ENCODE measurements at regions of chr15 and their contacts with region 1.

Region 1: DNA sequence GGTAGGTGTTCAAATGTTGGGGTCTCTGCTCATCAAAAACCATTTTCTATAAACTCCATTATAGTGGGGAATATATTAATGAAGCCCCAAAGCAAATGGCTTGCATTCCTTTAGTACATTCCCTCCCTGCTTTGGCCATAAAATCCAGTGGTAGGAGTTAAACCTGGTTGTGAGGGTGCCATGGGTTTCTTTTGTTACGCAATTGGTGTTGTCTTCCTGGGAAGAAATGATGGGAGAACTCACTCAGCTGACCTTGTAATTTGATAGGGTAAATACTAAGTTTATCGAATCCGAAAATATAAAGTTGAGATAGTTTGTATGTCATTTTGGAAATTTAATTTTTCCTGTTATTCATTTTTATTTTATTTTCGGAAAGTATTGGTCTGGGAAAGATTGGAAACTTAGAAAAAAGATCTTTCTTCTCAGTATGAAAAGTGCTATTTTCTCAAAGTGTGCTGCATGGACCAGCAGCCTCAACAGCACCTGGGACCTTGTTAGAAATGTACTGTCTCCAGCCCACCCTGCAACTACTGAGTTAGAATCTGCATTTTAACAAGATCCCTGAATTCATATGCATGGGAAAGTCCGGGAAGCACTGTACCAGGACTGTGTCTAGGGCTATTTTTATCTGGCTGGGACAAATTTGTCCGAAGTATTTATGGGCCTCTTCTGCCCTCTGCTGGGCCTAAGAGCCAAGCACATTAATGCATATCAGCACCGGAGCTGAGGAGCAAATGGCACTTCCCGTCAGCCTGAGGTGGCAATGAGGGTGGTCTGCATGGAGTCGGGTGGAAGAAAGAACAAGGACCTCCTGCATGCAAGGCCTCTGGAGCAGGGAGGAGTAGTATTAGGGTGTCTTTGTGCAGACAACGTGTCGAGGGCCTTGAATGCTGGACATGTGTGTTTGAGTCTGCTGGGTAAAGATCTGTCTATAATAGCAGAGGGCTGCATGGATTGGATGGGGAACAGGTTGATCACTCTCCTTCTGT is 54.7 kb downstream of the FAM81A start:
- DNase-seq: peak; percentile 56
- H3K4me3 Mint-ChIP-seq: no peak overlapping the region
- H3K27ac Mint-ChIP-seq: no peak overlapping the region
- H3K4me1 Mint-ChIP-seq: peaks cover 2% of the 10 kb centered on the region
- H3K27me3 Mint-ChIP-seq: no peaks in the 10 kb centered on the region

Region 2: GRCh38 chr15:59174835-59175831 is 317.6 kb before region 1 on chr15:
- CTCF ChIA-PET with region 1: interaction called, 22 read pairs
- POLR2A ChIA-PET with region 1: no interaction called
- intact Hi-C with region 1: loop called (anchors 2 kb)
- DNase-seq: peak; percentile 70
- H3K4me3 Mint-ChIP-seq: no peak overlapping the region
- H3K27ac Mint-ChIP-seq: no peak overlapping the region
- H3K4me1 Mint-ChIP-seq: peaks cover 14% of the 10 kb centered on the region
- H3K27me3 Mint-ChIP-seq: peaks cover 14% of the 10 kb centered on the region

Region 3: DNA sequence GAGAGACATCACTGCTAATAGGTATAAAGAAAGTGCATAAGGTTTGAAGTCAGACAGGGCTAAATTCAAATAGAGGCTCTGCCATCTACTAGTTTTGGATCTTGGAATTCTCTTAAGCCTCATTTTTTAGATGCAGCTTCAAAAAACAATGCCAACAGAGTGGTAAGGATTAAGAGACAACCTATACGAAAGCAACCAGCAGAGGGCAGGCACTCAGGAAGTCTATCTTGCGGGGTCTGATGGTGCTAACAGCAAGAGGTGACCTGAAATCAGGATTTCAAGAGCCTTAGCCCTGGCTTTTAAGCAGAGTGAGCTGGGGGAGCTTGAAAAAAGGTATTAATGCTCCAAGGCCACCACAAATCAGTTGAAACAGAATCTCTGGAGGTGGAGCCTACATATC is 245.3 kb before region 1 on chr15:
- CTCF ChIA-PET with region 1: interaction called, 27 read pairs
- POLR2A ChIA-PET with region 1: no interaction called
- intact Hi-C with region 1: loop called (anchors 2 kb)
- DNase-seq: peak; percentile 60
- H3K4me3 Mint-ChIP-seq: no peak overlapping the region
- H3K27ac Mint-ChIP-seq: no peak overlapping the region
- H3K4me1 Mint-ChIP-seq: peaks cover 8% of the 10 kb centered on the region
- H3K27me3 Mint-ChIP-seq: no peaks in the 10 kb centered on the region

Region 4: GRCh38 chr15:59461521-59461920 is 31.2 kb before region 1 on chr15:
- CTCF ChIA-PET with region 1: no interaction called
- POLR2A ChIA-PET with region 1: no interaction called
- intact Hi-C with region 1: no loop called
- DNase-seq: no peak
- H3K4me3 Mint-ChIP-seq: no peak overlapping the region
- H3K27ac Mint-ChIP-seq: no peak overlapping the region
- H3K4me1 Mint-ChIP-seq: no peaks in the 10 kb centered on the region
- H3K27me3 Mint-ChIP-seq: peaks cover 5% of the 10 kb centered on the region

Measured in activated CD4-positive, alpha-beta memory T cell treated with anti-CD3 and anti-CD28 coated beads for 36 hours (primary cell).